B cell (primary cell): ENCODE measurements at regions of chrX and their contacts with region 1.

Region 1: GRCh38 chrX:53088136-53088974 is 5.6 kb upstream of the KANTR start:
- DNase-seq: peak; percentile 82
- ATAC-seq: peak; percentile 72
- H3K4me3 ChIP-seq: peak overlapping the region; percentile 39 to 61 (median 59)
- H3K4me3 Mint-ChIP-seq: peak overlapping the region; percentile 92
- H3K27ac ChIP-seq: peak overlapping the region; percentile 72 to 82
- H3K27ac Mint-ChIP-seq: peak overlapping the region; percentile 94
- H3K4me1 ChIP-seq: peaks cover 4 to 21% of the 10 kb centered on the region in 2 donors
- H3K4me1 Mint-ChIP-seq: peaks cover 34% of the 10 kb centered on the region
- H3K27me3 ChIP-seq: no peaks in the 10 kb centered on the region
- H3K27me3 Mint-ChIP-seq: no peaks in the 10 kb centered on the region
- CTCF ChIP-seq: no peak

Region 2: DNA sequence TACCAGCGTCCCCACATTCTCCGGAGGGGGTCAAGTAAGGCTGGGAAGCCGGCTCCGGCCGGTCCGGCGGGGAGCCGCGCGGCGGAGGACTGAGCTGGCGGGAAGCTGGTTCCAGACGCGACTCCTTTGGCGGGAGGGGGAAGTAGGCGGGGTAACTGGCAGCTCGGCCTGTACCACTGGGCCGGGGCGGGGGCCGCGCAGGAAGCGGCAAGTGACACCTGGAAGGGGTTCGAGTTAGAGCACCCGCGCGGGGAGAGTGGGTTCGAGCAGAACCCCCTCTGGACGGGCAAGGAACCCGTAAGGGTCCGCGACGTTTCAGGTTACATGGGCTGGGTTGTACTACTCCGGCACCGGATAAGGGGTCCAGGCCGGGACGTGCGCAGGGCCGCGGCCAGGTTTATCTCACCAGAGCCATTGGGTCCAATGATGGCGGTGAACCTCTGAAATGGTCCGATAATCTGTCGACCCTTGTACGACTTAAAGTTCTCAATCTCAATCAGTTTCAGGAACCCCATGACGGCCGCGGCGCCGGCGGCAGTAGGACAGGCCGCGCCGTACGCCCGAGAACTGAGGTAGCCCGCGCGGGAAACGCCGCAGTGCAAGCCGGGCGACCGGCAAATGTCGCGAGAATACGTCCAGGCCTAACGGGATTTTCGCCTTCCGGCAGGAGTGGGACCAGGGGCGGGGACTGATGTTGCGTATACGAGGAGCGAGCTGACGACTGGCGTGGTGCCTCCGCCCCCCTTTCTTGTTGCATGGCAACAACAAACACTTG is 333.9 kb after region 1 on chrX and contains the start of gene SMC1A:
- CTCF ChIA-PET with region 1: no interaction called
- POLR2A ChIA-PET with region 1: no interaction called
- intact Hi-C with region 1: loop called (anchors 2 kb)
- DNase-seq: peak; percentile 96
- ATAC-seq: peak; percentile 91
- H3K4me3 ChIP-seq: peak within 1 kb of the TSS; percentile 43 to 95 (median 93)
- H3K4me3 Mint-ChIP-seq: peak within 1 kb of the TSS; percentile 87
- H3K27ac ChIP-seq: peak within 1 kb of the TSS; percentile 96 to 98
- H3K27ac Mint-ChIP-seq: peak within 1 kb of the TSS; percentile 94
- H3K4me1 ChIP-seq: peaks cover 17 to 23% of the 10 kb centered on the region in 2 donors
- H3K4me1 Mint-ChIP-seq: peaks cover 31% of the 10 kb centered on the region
- H3K27me3 ChIP-seq: no peaks in the 10 kb centered on the region
- H3K27me3 Mint-ChIP-seq: no peaks in the 10 kb centered on the region
- CTCF ChIP-seq: no peak
- total RNA-seq, gene SMC1A: 67.6 and 70.0 TPM in 2 replicates